ENCODE measurements at regions of chr15 and their contacts with region 1.

Region 1: GRCh38 chr15:82540055-82540983 is at the start of gene RPS17:
- DNase-seq: peak; percentile 98
- H3K4me3 Mint-ChIP-seq: peak within 1 kb of the TSS; percentile 91
- H3K27ac Mint-ChIP-seq: peak within 1 kb of the TSS; percentile 94
- H3K4me1 Mint-ChIP-seq: peaks cover 33% of the 10 kb centered on the region
- H3K27me3 Mint-ChIP-seq: no peaks in the 10 kb centered on the region
- total RNA-seq, gene RPS17: 2,478 and 2,503 TPM in 2 replicates

Region 2: GRCh38 chr15:81296673-81297072 is 1243.6 kb before region 1 on chr15:
- intact Hi-C with region 1: loop called (anchors 10 kb)
- DNase-seq: peak; percentile 77
- H3K4me3 Mint-ChIP-seq: peak overlapping the region; percentile 97
- H3K27ac Mint-ChIP-seq: peak overlapping the region; percentile 94
- H3K4me1 Mint-ChIP-seq: peaks cover 95% of the 10 kb centered on the region
- H3K27me3 Mint-ChIP-seq: no peaks in the 10 kb centered on the region

Region 3: GRCh38 chr15:82262422-82263026 is 277.8 kb before region 1 on chr15 and contains the starts of genes EFL1 and SAXO2:
- intact Hi-C with region 1: loop called (anchors 1 kb)
- DNase-seq: peak; percentile 91
- H3K4me3 Mint-ChIP-seq: peak within 1 kb of the TSS; percentile 96
- H3K27ac Mint-ChIP-seq: peak within 1 kb of the TSS; percentile 95
- H3K4me1 Mint-ChIP-seq: peaks cover 27% of the 10 kb centered on the region
- H3K27me3 Mint-ChIP-seq: no peaks in the 10 kb centered on the region
- total RNA-seq, gene EFL1: 25.2 and 25.6 TPM in 2 replicates
- total RNA-seq, gene SAXO2: 0.54 and 0.57 TPM in 2 replicates

Region 4: DNA sequence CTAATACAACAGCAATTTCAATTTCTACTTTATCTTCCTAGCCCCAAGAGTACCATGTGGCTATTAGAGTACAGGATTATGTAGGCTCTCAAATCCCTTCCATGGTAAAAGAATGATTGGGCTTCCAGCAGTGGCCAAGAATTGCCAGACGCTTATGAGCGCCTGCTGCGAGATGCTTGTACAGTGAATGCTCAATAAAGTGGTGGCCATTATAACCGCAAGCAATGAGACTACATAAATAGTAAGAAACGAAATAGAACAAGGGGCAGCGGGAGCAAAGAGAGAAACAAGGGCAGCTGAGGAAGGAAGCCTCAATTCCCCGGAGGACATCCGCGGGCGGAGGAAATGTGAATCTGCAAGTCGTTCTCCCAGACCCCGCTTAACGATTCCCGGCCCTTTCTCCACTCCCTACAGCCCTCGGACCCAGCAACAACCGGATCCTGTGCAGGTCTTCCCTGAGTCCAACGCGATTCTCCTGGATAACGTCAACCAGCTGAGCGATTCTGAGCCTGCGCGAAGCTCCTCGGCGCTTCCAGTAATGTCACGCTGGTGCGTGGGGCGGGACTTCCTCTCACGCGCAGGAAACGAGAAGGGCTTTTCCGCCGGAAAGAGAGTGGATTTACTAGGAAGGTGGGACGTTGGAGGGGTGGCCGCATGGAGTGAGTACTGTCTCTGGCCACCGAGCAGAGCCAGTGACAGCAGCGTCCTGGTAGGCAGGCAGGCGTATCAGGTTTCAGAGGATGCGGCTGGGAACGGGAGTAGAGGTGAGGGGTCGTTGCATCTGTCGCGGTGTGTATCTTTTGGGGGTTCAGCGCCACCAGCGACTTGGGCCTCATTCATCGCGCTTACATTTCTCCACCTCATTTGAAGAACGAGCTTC is 209.9 kb after region 1 on chr15:
- intact Hi-C with region 1: loop called (anchors 1 kb)
- DNase-seq: peak; percentile 82
- H3K4me3 Mint-ChIP-seq: peak overlapping the region; percentile 100
- H3K27ac Mint-ChIP-seq: peak overlapping the region; percentile 97
- H3K4me1 Mint-ChIP-seq: peaks cover 39% of the 10 kb centered on the region
- H3K27me3 Mint-ChIP-seq: no peaks in the 10 kb centered on the region

Region 5: GRCh38 chr15:82985688-82986441 is 445.5 kb after region 1 on chr15 and contains the start of gene RAMAC:
- intact Hi-C with region 1: loop called (anchors 1 kb)
- DNase-seq: peak; percentile 86
- H3K4me3 Mint-ChIP-seq: peak within 1 kb of the TSS; percentile 98
- H3K27ac Mint-ChIP-seq: peak within 1 kb of the TSS; percentile 73
- H3K4me1 Mint-ChIP-seq: peaks cover 25% of the 10 kb centered on the region
- H3K27me3 Mint-ChIP-seq: no peaks in the 10 kb centered on the region
- total RNA-seq, gene RAMAC: 26.1 and 27.3 TPM in 2 replicates

Region 6: DNA sequence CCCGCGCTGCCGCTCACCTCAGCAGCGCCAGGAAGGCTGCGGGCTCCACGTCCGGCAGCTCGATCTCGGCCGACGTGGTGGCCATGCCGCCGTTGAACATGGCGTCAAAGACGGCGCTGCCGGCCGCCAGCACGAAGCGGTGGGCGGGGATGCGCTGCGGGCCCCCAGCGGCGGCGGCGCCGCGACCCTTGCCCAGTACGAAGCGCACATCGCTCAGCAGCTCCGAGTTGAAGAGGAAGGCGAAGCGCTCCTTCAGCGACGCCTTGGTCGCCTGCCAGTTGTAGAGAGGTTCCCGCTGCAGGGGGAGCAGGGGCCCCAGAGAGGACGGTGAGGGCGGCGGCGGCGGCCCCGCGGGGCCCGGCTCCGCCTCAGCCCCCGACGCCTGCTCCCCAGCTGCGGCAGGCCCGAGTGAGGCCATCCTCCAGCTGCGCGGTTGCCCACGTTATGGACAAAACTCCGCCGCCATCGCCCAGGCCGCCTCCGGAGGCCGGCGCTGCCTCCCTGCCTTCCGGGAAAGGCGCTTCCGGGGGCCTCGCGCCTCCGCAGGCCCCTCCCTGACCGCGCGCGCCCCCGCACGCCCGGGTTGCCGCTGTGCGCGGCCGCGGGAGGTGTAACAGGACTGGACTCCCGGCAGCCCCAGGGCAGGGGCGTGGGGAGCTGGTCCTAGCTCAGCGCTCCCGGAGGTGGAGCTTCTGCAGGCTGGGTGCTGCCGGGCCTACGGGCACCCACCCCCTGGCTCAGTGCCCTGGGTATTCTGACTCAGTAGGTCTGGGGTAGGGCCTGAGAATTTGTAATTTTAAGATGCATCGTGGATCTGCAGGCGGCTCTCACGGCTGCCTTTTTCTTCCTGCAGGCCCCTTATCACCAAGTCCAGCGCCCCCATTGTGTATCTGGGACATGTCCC is 526.7 kb after region 1 on chr15 and contains the start of gene BTBD1:
- intact Hi-C with region 1: loop called (anchors 10 kb)
- DNase-seq: peak; percentile 84
- H3K4me3 Mint-ChIP-seq: peak within 1 kb of the TSS; percentile 84
- H3K27ac Mint-ChIP-seq: peak within 1 kb of the TSS; percentile 83
- H3K4me1 Mint-ChIP-seq: peaks cover 32% of the 10 kb centered on the region
- H3K27me3 Mint-ChIP-seq: peaks cover 2% of the 10 kb centered on the region
- total RNA-seq, gene BTBD1: 61.7 and 61.8 TPM in 2 replicates

Measured in activated T-helper 1 cell treated with anti-CD3 and anti-CD28 coated beads, Interleukin-12 subunit alpha, Interleukin-12 subunit beta, Interleukin-2, Interleukin-4 antibody, amounts not matched to agents 30 ng/mL and 10 ng/mL and 1 ng/mL, durations not matched to agents 14 hours and 24 hours and 36 hours (primary cell).